IMR-90 (cell line): ENCODE measurements at regions of chr7 and their contacts with region 1.

Region 1: DNA sequence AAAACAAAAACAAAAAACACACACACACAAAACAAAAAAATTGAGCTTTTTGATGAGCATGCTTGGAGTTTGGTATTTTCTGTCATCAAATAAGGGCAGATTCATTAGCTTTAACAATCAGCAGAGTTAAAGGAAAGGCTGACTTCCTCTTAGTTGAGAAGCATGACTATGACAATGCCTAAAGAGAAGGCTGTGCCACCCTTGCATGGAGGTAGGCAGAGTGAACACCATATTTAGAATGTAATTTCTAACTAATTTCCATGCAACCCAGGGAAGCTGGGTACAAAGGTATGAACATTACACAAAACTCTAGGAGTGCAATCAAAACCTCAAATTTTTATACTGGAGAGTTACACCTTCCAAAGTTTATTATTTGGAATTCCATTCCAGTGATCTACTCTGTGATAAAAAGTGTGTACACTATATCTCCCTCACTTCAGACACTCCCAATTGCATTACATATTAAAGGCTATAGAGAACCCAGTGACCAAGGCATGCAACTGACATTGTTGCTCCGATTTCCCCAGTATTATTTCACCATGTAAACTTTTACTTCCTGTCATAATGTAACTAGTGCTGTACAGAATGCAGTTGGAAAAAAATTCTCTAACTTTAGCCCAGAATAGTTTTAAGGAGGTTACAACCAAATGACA is 9.4 kb upstream of the CYCS start:
- DNase-seq: peak; percentile 39
- ATAC-seq: peak; percentile 91
- H3K4me3 ChIP-seq: no peak overlapping the region
- H3K27ac ChIP-seq: no peak overlapping the region
- H3K4me1 ChIP-seq: no peaks in the 10 kb centered on the region; the same call in none of the 2 replicates
- H3K27me3 ChIP-seq: no peaks in the 10 kb centered on the region
- CTCF ChIP-seq: no peak
- POLR2A ChIP-seq: no peak
- RAD21 ChIP-seq: no peak

Region 2: DNA sequence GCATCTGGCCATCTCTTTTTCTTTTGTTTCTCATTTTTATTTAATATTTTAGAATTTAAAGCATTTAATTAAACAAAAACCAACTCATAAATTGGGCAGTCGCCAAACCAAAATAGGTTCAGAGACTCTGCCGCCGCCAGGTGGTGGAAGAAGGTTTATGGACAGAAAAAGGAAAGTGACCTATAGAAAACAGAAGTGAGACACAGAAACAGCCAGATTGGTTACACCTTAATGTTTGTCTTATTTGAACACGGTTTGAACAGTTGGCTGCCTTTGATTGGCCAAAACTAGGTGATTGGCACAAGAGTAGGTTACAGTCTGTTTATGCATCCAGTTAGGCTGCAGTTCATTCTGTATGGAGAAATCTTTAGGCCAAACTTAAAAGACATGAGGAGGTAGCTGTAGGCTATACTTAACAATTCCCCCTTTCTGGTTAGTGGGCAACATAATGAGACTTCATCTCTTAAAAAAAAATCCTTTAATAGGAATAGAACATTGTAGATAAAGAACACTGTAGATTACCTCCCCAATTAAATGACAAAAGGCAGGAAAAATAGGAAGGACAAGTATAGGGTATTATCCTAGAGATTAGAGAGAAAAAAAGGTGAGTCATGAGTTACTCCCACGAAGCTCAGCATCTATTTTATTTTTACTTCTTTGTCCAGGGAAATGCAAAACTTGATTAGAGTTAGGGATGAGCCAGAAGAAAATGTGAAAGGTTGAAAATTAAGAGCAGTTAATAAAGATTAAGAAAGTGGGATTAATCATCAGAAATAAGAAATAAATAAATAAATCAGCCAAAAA is 14.5 kb after region 1 on chr7:
- CTCF ChIA-PET with region 1: no interaction called
- POLR2A ChIA-PET with region 1: no interaction called
- dilution Hi-C with region 1: no loop called
- in situ Hi-C with region 1: no loop called
- intact Hi-C with region 1: loop called (anchors 2 kb)
- DNase-seq: no peak
- ATAC-seq: no peak
- H3K4me3 ChIP-seq: no peak overlapping the region
- H3K27ac ChIP-seq: no peak overlapping the region
- H3K4me1 ChIP-seq: no peaks in the 10 kb centered on the region
- H3K27me3 ChIP-seq: no peaks in the 10 kb centered on the region
- CTCF ChIP-seq: no peak
- POLR2A ChIP-seq: no peak
- RAD21 ChIP-seq: no peak